ENCODE measurements at regions of chr12 and their contacts with region 1.

Region 1: GRCh38 chr12:112382232-112382796 is at the start of gene HECTD4:
- DNase-seq: peak; percentile 42
- ATAC-seq: peak; percentile 92
- H3K4me3 ChIP-seq: peak within 1 kb of the TSS; percentile 58 to 80
- H3K27ac ChIP-seq: peak within 1 kb of the TSS; percentile 86
- H3K4me1 ChIP-seq: peaks cover 12 to 19% of the 10 kb centered on the region in 2 experiments; a peak in 3 of 4 replicates
- H3K27me3 ChIP-seq: no peaks in the 10 kb centered on the region
- CTCF ChIP-seq: no peak
- POLR2A ChIP-seq: peak; percentile 85
- RAD21 ChIP-seq: no peak
- total RNA-seq, gene HECTD4: 31.2 TPM

Region 2: DNA sequence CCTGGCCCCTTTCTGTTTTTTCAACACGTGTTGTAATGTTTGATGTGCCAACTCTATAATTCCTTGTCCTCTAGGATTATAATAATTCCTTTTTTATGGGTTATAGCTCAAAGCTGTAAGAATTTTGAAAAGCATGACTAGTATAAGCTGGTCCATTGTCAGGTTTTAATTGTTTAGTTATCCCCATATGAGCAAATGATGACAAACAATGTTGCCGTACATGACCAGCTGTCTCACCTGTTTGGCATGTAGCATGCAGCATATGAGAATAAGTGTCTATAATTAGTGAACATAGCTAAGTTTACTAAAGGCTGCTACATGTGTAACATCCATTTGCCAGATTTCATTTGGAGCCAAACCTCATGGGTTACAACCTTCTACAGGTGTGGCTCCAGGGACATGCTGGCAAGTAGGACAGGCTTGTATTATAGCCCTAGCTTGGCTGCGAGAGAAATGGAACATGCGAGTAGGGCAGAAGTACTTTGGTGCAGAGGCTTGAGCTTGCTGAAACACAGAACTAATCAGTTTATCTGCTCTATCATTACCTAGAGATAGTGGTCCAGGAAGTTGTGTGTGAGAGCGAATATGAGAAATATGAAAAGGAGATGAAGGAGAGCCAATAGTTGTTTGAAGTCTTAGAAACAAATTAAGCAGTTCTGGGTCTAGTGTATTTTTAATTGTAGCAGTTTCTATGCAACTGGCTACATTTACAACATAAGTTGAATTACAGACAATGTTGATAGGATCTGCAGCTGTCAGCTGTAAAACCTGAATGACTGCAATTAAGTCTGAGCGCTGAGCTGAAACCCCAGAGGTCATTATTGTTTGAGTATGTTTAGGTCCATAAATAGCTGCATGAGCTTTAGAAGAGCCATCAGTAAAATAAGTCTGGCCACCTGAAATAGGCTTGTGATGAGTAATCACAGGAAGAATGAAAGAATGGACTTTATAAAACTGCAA is 562.8 kb before region 1 on chr12:
- CTCF ChIA-PET with region 1: no interaction called
- POLR2A ChIA-PET with region 1: no interaction called
- RAD21 ChIA-PET with region 1: no interaction called
- intact Hi-C with region 1: loop called (anchors 1 kb)
- DNase-seq: no peak
- ATAC-seq: no peak
- H3K4me3 ChIP-seq: no peak overlapping the region
- H3K27ac ChIP-seq: no peak overlapping the region
- H3K4me1 ChIP-seq: no peaks in the 10 kb centered on the region
- H3K27me3 ChIP-seq: no peaks in the 10 kb centered on the region
- CTCF ChIP-seq: no peak
- POLR2A ChIP-seq: no peak
- RAD21 ChIP-seq: no peak

Region 3: GRCh38 chr12:111942557-111942956 is 439.8 kb before region 1 on chr12:
- CTCF ChIA-PET with region 1: interaction called, 10 read pairs
- POLR2A ChIA-PET with region 1: no interaction called
- RAD21 ChIA-PET with region 1: interaction called in 1 of 2 experiments, 6 read pairs
- intact Hi-C with region 1: loop called (anchors 1 kb)
- DNase-seq: no peak
- ATAC-seq: no peak
- H3K4me3 ChIP-seq: no peak overlapping the region
- H3K27ac ChIP-seq: no peak overlapping the region
- H3K4me1 ChIP-seq: no peaks in the 10 kb centered on the region; a peak in 1 of 4 replicates
- H3K27me3 ChIP-seq: no peaks in the 10 kb centered on the region
- CTCF ChIP-seq: no peak
- POLR2A ChIP-seq: no peak
- RAD21 ChIP-seq: no peak

Region 4: DNA sequence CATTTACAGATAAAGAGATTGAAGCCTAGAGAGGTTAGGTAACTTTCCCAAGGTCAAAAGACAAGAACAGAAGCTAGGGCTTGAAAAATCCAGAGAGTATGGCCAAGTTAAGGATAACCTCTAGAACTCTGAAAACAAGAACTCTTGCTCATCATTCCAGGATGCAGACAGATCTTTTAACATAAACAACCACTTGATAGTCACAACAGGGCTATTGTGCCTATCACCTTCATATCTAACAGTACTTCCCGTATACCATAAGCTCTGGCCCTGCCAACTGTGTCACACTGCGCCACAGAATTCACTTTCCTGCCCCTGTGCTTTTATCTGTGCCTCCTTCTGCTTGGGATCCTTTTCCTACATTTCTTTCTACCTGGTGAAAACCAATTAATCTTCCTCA is 350.8 kb before region 1 on chr12:
- CTCF ChIA-PET with region 1: no interaction called
- POLR2A ChIA-PET with region 1: no interaction called
- RAD21 ChIA-PET with region 1: no interaction called
- intact Hi-C with region 1: loop called (anchors 10 kb)
- DNase-seq: no peak
- ATAC-seq: no peak
- H3K4me3 ChIP-seq: no peak overlapping the region
- H3K27ac ChIP-seq: no peak overlapping the region
- H3K4me1 ChIP-seq: no peaks in the 10 kb centered on the region
- H3K27me3 ChIP-seq: no peaks in the 10 kb centered on the region
- CTCF ChIP-seq: no peak
- POLR2A ChIP-seq: no peak
- RAD21 ChIP-seq: no peak

Region 5: DNA sequence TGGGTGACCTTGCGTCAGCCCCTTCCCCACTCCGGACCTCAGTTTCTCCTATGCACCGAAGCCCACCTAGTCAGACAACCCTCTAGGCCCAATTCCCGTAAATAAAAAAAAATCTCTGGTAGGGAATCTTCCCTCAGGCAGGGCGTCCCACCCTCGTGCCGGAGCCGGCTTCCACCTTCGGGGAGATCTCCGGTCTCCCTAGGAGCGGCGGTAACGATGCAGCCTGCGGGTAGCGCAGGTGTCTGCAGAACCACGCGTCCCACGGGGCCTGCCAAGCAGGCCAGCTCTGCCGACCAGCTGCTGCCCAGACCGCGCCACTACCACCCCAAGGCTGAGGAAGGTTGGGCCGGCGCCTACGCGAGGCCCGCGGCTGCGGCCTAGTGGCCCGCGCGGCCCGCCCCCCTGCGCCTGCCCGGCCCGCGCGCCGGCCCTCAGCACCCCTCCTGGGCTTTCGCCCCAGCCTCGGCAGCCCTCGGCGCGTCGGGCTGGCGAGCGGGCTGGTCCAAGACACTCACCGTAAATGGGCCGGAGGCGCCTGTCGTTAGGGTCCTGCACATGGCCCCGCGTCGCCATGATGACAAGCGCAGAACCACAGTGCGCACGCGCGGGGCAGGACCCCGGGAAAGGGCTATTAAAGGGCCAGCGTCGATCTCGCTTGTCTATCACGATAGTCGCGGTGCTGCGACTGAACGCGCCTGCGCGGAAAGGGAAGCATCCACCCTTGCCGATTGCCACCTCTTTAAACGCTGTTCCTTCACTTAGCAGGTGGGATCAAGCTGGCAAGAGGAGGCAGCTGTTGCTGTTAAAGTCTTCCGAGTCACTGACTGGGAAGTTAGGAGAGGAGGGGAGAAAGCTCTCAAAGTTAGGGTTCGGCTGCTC is 273.9 kb before region 1 on chr12 and contains the start of gene NAA25:
- CTCF ChIA-PET with region 1: no interaction called
- POLR2A ChIA-PET with region 1: no interaction called
- RAD21 ChIA-PET with region 1: interaction called, 3 to 5 read pairs
- intact Hi-C with region 1: loop called (anchors 10 kb)
- DNase-seq: peak; percentile 72
- ATAC-seq: peak; percentile 67
- H3K4me3 ChIP-seq: peak within 1 kb of the TSS; percentile 82 to 96
- H3K27ac ChIP-seq: peak within 1 kb of the TSS; percentile 96
- H3K4me1 ChIP-seq: peaks cover 57 to 76% of the 10 kb centered on the region in 2 experiments
- H3K27me3 ChIP-seq: no peaks in the 10 kb centered on the region
- CTCF ChIP-seq: no peak
- POLR2A ChIP-seq: peak; percentile 22
- RAD21 ChIP-seq: no peak
- total RNA-seq, gene NAA25: 56.6 TPM

Region 6: GRCh38 chr12:112198120-112198733 is 184.1 kb before region 1 on chr12:
- CTCF ChIA-PET with region 1: interaction called, 52 read pairs
- POLR2A ChIA-PET with region 1: interaction called, 6 read pairs
- RAD21 ChIA-PET with region 1: interaction called, 7 to 19 read pairs
- intact Hi-C with region 1: loop called (anchors 1 kb)
- DNase-seq: peak; percentile 41
- ATAC-seq: peak; percentile 99
- H3K4me3 ChIP-seq: no peak overlapping the region
- H3K27ac ChIP-seq: no peak overlapping the region
- H3K4me1 ChIP-seq: no peaks in the 10 kb centered on the region
- H3K27me3 ChIP-seq: no peaks in the 10 kb centered on the region
- CTCF ChIP-seq: peak; percentile 66 to 77 (median 71); a peak in 5 of 6 replicates
- POLR2A ChIP-seq: no peak
- RAD21 ChIP-seq: peak; percentile 75

Region 7: GRCh38 chr12:112294793-112295192 is 87.5 kb before region 1 on chr12:
- CTCF ChIA-PET with region 1: interaction called, 5 read pairs
- POLR2A ChIA-PET with region 1: no interaction called
- RAD21 ChIA-PET with region 1: interaction called in 1 of 2 experiments, 4 read pairs
- intact Hi-C with region 1: loop called (anchors 10 kb)
- DNase-seq: peak; percentile 15
- ATAC-seq: peak; percentile 62; the same call in 1 of the 2 replicates
- H3K4me3 ChIP-seq: no peak overlapping the region
- H3K27ac ChIP-seq: no peak overlapping the region
- H3K4me1 ChIP-seq: no peaks in the 10 kb centered on the region
- H3K27me3 ChIP-seq: no peaks in the 10 kb centered on the region
- CTCF ChIP-seq: peak; percentile 19 to 37 (median 23); a peak in 2 of 6 replicates
- POLR2A ChIP-seq: no peak
- RAD21 ChIP-seq: peak; percentile 52